MCF 10A (cell line): ENCODE measurements at regions of chr2 and their contacts with region 1.

Region 1: DNA sequence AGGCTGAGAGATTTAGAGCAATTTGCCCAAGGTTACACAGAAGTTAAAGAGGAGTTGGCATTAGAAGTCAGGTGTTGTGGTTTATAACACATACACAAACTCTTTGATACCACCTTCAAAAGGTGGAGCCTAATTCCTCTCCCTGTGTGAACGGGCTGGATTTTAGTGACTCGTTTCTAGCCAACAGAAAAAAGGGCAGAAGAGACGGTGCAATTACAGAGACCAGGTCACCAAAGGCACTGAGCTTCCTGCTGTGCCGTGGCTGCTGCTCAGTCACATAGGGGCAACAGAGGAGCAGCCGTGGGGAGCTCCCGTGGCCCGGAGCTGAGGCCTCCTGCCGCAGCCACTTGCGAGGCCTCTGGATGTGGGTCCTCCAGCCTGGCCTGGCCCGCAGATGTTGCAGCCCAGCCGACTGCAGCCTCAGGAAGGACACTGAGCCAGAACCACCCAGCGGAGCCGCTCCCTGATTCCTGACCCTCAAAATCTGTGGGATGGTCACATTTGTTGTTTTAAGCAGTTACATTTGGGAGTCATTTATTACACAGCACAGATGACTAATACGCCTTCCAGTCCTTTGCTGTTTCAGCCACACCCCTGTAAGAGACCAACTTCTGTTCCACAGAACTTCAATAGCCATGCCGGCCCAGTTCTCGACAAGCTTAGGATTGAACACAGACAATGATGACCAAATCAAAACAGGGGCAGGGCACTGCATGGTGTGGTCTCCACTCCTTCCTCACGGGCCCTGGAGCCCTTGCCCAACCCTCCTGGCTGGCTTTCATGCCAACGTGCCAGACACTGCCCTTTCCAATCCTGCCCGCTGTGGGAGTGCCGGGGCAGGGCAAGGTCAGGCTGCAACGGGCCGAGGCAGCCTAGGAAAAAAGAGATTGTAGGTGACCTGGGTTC is 17.1 kb downstream of the EDAR start:
- DNase-seq: peak; percentile 95
- H3K4me3 Mint-ChIP-seq: peak overlapping the region; percentile 52
- H3K27ac Mint-ChIP-seq: peak overlapping the region; percentile 71
- H3K4me1 Mint-ChIP-seq: peaks cover 49% of the 10 kb centered on the region
- H3K27me3 Mint-ChIP-seq: no peaks in the 10 kb centered on the region
- CTCF ChIP-seq: no peak

Region 2: DNA sequence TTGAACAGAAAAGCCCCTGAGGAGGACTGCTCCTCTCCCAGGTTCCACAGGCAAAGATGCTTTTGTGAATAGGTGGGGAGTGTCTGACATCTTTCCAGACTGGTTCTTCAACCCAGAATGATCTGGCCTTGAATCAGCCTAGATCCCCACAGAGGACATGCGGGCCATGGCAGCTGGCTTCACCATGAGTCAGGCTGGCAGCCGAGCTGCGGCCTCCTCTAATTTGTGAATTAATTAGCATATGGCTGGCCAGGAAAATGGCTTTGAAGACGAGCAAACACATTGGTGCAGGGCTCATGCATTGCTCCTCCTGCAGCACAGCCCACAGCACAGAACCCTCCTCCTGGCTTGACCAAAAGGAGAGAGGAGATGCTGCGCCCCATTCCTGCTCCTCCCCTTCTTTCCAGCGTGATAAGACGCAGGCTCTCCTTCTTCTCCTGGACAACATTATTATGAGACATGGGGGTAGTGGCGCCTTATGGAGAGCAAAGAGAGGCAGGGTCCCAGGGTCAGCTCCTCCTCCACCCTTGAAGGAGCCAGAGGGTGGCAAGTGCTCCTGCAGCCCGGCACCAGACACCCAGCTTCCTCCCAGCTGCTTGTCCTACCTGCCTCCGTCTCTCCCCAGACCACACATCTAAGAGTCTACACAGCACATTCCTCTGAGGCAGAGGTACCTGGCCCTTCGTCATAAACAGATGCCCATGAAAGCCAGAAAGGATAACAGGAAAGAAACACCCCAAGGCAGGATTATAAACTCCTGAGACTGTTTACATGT is 49.6 kb before region 1 on chr2:
- CTCF ChIA-PET with region 1: interaction called, 8 read pairs
- POLR2A ChIA-PET with region 1: interaction called, 12 read pairs
- intact Hi-C with region 1: no loop called
- DNase-seq: peak; percentile 60
- H3K4me3 Mint-ChIP-seq: no peak overlapping the region
- H3K27ac Mint-ChIP-seq: no peak overlapping the region
- H3K4me1 Mint-ChIP-seq: peaks cover 19% of the 10 kb centered on the region
- H3K27me3 Mint-ChIP-seq: peaks cover 10% of the 10 kb centered on the region
- CTCF ChIP-seq: no peak